ENCODE measurements at regions of chr2 and their contacts with region 1.

Region 1: GRCh38 chr2:231227309-231228162 is 29.1 kb downstream of the ARMC9 start:
- DNase-seq: peak; percentile 64
- H3K4me3 Mint-ChIP-seq: no peak overlapping the region
- H3K27ac Mint-ChIP-seq: no peak overlapping the region
- H3K4me1 Mint-ChIP-seq: no peaks in the 10 kb centered on the region
- H3K27me3 Mint-ChIP-seq: no peaks in the 10 kb centered on the region

Region 2: GRCh38 chr2:230987137-230988020 is 240.2 kb before region 1 on chr2:
- CTCF ChIA-PET with region 1: no interaction called
- DNase-seq: peak; percentile 79
- H3K4me3 Mint-ChIP-seq: peak overlapping the region; percentile 51
- H3K27ac Mint-ChIP-seq: no peak overlapping the region
- H3K4me1 Mint-ChIP-seq: peaks cover 27% of the 10 kb centered on the region
- H3K27me3 Mint-ChIP-seq: peaks cover 66% of the 10 kb centered on the region

Region 3: DNA sequence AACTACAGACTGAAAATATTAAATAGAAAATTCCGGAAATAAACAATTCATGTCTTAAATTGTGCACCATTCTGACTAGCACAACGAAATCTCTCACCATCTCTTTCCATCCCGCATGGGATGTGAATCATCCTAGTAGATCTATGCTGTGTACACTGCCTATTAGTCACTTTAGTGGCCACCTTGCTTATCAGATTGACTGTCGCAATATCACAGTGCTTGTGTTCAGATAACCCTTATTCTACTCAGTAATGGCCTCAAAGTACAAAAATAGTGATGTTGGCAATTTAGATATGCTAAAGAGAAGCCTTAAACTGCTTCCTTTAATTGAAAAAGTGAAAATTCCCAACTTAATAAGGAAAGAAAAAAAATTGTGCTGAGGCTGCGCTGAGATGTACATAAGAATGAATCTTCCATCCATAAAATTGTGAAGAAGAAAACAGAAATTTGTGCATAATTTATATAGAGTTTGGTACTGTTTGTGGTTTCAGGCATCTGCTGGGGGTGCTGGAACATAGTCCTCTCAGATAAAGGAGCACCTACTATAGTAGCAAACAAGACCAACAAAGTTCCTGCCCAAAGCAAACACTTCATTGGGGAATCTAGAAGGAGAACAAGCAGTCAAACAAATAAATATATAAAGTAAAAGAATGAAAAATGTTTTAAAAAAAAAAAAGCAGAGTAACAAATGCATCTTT is 158.9 kb before region 1 on chr2:
- CTCF ChIA-PET with region 1: no interaction called
- DNase-seq: no peak
- H3K4me3 Mint-ChIP-seq: no peak overlapping the region
- H3K27ac Mint-ChIP-seq: no peak overlapping the region
- H3K4me1 Mint-ChIP-seq: no peaks in the 10 kb centered on the region
- H3K27me3 Mint-ChIP-seq: no peaks in the 10 kb centered on the region

Region 4: GRCh38 chr2:231181860-231182512 is 45.5 kb before region 1 on chr2:
- CTCF ChIA-PET with region 1: no interaction called
- DNase-seq: no peak
- H3K4me3 Mint-ChIP-seq: no peak overlapping the region
- H3K27ac Mint-ChIP-seq: no peak overlapping the region
- H3K4me1 Mint-ChIP-seq: peaks cover 11% of the 10 kb centered on the region
- H3K27me3 Mint-ChIP-seq: peaks cover 15% of the 10 kb centered on the region

Region 5: GRCh38 chr2:231213921-231214642 is 13.5 kb before region 1 on chr2:
- CTCF ChIA-PET with region 1: interaction called, 16 read pairs
- DNase-seq: no peak
- H3K4me3 Mint-ChIP-seq: no peak overlapping the region
- H3K27ac Mint-ChIP-seq: no peak overlapping the region
- H3K4me1 Mint-ChIP-seq: no peaks in the 10 kb centered on the region
- H3K27me3 Mint-ChIP-seq: no peaks in the 10 kb centered on the region

Region 6: GRCh38 chr2:231238689-231239088 is 11.2 kb after region 1 on chr2:
- CTCF ChIA-PET with region 1: interaction called, 10 read pairs
- DNase-seq: no peak
- H3K4me3 Mint-ChIP-seq: no peak overlapping the region
- H3K27ac Mint-ChIP-seq: no peak overlapping the region
- H3K4me1 Mint-ChIP-seq: no peaks in the 10 kb centered on the region
- H3K27me3 Mint-ChIP-seq: no peaks in the 10 kb centered on the region

Region 7: DNA sequence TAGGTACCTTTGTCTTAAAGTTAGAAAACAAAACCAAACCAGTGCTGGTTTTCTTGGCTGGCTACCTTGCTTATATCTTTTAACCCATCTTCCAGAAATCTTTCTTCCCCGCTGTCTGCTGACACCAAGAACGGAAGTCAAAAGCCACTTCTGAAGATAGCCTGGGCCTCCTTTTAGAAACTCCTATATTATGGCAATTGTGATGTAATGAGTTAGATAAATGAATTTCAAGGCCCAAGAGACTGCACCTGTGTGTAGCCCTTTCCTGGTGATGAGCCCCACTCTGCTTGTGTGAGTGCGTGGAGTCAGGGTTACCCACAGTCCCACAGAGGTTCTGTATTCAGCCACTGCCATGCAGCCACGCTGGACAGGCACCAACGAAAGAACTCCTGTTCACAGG is 31.6 kb after region 1 on chr2:
- CTCF ChIA-PET with region 1: no interaction called
- DNase-seq: peak; percentile 28
- H3K4me3 Mint-ChIP-seq: no peak overlapping the region
- H3K27ac Mint-ChIP-seq: no peak overlapping the region
- H3K4me1 Mint-ChIP-seq: peaks cover 13% of the 10 kb centered on the region
- H3K27me3 Mint-ChIP-seq: peaks cover 69% of the 10 kb centered on the region

Region 8: DNA sequence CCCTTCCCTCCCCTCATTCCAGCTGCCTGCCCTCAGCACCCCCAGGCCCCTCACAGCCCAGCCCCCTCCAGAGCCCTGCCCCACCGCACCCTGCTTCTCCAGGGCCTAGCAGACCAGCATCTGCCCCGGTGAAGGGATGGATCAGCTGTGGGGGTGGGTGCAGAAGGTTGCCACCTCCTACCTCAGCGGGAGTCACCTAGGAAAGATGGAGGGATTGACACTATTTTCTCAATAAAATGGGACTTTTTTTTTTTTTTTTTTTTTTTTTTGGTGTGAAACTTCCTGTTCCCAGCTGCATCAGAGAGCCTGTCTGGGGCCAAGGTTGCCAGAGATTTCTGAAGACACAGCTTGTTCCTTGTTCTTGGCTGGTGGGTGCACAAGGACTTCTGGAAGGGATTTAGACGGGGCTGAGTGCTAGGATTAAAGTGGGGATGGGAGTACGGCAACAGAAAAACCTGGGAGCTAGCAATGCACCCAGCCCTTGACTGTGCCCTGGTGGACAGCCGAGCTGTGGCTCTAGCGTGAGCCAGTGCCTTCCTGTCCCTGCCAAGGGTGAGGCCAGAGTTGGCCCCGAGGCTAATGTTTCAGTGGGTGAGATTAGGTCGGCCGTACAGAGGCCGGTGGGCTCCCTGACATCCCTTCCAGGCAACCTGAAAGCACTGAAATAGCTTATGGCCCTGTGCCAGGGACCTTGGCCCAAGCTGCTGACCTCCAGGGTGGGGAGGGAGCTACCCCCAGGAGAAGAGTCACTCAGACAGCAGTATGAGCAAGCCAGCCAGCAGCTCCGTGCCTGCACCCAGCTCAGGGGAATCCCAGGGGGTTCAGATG is 172.5 kb after region 1 on chr2:
- CTCF ChIA-PET with region 1: interaction called, 36 read pairs
- DNase-seq: no peak
- H3K4me3 Mint-ChIP-seq: no peak overlapping the region
- H3K27ac Mint-ChIP-seq: no peak overlapping the region
- H3K4me1 Mint-ChIP-seq: peaks cover 3% of the 10 kb centered on the region
- H3K27me3 Mint-ChIP-seq: peaks cover 58% of the 10 kb centered on the region

Region 9: DNA sequence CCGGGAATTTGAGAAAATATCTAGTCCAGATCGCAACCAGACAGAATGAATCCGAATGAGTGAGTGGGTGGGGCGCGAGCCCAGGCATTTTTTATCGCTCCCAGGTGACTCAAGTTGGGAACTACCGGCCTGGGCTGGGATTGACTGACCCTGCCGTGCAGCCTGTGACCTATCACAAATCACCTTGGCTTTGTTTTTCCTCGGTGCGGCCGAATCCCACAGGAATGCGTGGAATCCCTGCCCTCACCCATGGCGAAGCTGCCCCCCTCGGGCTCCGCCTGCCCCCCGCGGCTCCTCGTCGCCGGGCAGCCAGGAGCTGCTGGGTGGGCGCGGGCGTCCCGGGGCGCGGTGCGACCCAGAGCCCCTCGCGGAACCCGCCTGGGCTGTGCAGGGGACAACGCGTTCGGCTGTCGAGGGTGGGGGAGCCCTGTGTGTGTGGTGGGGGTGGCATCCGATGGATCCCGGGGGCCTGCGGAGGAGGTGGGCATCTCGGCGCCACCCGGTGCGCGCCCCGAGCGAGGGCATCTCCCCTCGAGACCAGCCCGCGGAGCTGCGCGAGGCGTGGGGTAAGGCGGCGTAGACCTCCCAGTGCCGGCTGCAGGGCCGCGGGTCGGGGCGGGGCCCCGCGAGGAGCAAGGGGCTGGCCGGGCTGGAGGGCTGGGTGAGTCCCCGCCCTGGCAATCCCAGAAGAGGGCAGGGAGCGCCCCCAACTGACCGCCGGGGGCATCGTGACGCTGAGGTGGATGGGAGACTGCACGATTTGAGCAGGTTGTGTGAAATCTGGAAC is 184.5 kb after region 1 on chr2:
- CTCF ChIA-PET with region 1: interaction called, 36 read pairs
- DNase-seq: peak; percentile 69
- H3K4me3 Mint-ChIP-seq: no peak overlapping the region
- H3K27ac Mint-ChIP-seq: no peak overlapping the region
- H3K4me1 Mint-ChIP-seq: peaks cover 10% of the 10 kb centered on the region
- H3K27me3 Mint-ChIP-seq: peaks cover 72% of the 10 kb centered on the region

Region 10: GRCh38 chr2:231452799-231453508 is 225.4 kb after region 1 on chr2:
- CTCF ChIA-PET with region 1: interaction called, 16 read pairs
- DNase-seq: no peak
- H3K4me3 Mint-ChIP-seq: no peak overlapping the region
- H3K27ac Mint-ChIP-seq: peak overlapping the region; percentile 78
- H3K4me1 Mint-ChIP-seq: peaks cover 6% of the 10 kb centered on the region
- H3K27me3 Mint-ChIP-seq: no peaks in the 10 kb centered on the region

Measured in activated naive CD4-positive, alpha-beta T cell treated with anti-CD3 and anti-CD28 coated beads, Interleukin-2, amount 10 ng/mL, durations not matched to agents 7 days and 5 days (primary cell).